HCT116 (cell line): ENCODE measurements at regions of chr22 and their contacts with region 1.

Region 1: GRCh38 chr22:42437488-42438292 is 5.5 kb upstream of the NFAM1 start:
- DNase-seq: peak; percentile 51
- ATAC-seq: peak; percentile 91
- H3K4me3 ChIP-seq: peak overlapping the region; percentile 49 to 64
- H3K27ac ChIP-seq: no peak overlapping the region; the same call in 1 of the 2 replicates
- H3K4me1 ChIP-seq: peaks cover 0 to 18% of the 10 kb centered on the region in 2 experiments; a peak in 3 of 4 replicates
- H3K27me3 ChIP-seq: no peaks in the 10 kb centered on the region
- CTCF ChIP-seq: peak; percentile 96 to 99 (median 98)
- POLR2A ChIP-seq: no peak
- RAD21 ChIP-seq: peak; percentile 99

Region 2: GRCh38 chr22:42277988-42278776 is 159.5 kb before region 1 on chr22:
- CTCF ChIA-PET with region 1: interaction called, 5 read pairs
- POLR2A ChIA-PET with region 1: no interaction called
- RAD21 ChIA-PET with region 1: no interaction called
- intact Hi-C with region 1: loop called (anchors 5 kb)
- DNase-seq: no peak
- ATAC-seq: no peak
- H3K4me3 ChIP-seq: no peak overlapping the region
- H3K27ac ChIP-seq: no peak overlapping the region
- H3K4me1 ChIP-seq: no peaks in the 10 kb centered on the region
- H3K27me3 ChIP-seq: no peaks in the 10 kb centered on the region
- CTCF ChIP-seq: no peak
- POLR2A ChIP-seq: no peak
- RAD21 ChIP-seq: peak; percentile 48; the same call in 1 of the 2 replicates

Region 3: DNA sequence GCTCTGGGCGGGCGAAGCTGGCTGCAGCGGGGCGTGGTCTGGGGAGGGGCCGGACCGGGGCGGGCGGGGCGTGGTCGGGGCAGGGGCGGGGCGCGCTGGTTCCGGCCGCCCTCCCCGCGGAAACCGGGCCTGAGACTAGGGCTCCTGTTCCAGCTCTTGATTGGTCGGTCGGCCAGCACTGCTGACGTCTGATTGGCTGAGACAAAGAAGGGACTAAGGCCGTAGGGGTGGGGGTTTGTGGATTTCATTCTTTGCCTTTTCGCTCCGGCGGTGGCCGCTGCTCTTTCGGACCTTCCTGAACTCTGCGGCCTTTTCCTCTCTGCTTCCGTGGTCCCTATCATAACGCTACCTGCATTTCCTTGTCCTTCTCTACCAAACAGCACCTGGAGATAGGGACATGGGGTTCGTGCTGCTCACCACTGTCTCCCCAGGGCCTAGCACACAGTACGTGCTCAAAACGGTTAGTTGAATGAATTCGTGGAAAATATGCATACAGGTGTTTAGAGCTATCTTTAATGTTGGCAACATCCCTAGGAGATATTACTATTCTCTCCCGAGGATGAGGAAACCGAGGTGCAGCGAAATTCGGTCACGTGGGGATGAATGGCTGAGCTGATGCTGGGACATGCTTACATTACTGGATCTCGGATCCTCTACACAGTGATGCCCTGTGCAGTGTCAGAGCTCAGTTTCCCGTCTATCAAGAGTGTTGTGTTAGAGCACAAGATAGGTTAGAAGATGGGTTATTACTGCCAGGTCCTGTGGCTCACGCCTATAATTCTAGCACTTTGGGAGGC is 68.2 kb before region 1 on chr22:
- CTCF ChIA-PET with region 1: no interaction called
- POLR2A ChIA-PET with region 1: no interaction called
- RAD21 ChIA-PET with region 1: no interaction called
- intact Hi-C with region 1: loop called (anchors 1 kb)
- DNase-seq: peak; percentile 88
- ATAC-seq: peak; percentile 95
- H3K4me3 ChIP-seq: peak overlapping the region; percentile 86 to 94
- H3K27ac ChIP-seq: peak overlapping the region; percentile 56
- H3K4me1 ChIP-seq: peaks cover 14 to 24% of the 10 kb centered on the region in 2 experiments
- H3K27me3 ChIP-seq: no peaks in the 10 kb centered on the region
- CTCF ChIP-seq: no peak
- POLR2A ChIP-seq: peak; percentile 60
- RAD21 ChIP-seq: no peak

Region 4: GRCh38 chr22:42399315-42400271 is 38.1 kb before region 1 on chr22:
- CTCF ChIA-PET with region 1: no interaction called
- POLR2A ChIA-PET with region 1: no interaction called
- RAD21 ChIA-PET with region 1: no interaction called
- intact Hi-C with region 1: no loop called
- DNase-seq: no peak
- ATAC-seq: no peak
- H3K4me3 ChIP-seq: no peak overlapping the region
- H3K27ac ChIP-seq: no peak overlapping the region
- H3K4me1 ChIP-seq: peaks cover 4 to 7% of the 10 kb centered on the region in 2 experiments; a peak in 3 of 4 replicates
- H3K27me3 ChIP-seq: no peaks in the 10 kb centered on the region
- CTCF ChIP-seq: no peak
- POLR2A ChIP-seq: no peak
- RAD21 ChIP-seq: no peak